Pancreas (tissue), 10 donors: ENCODE measurements at regions of chrX and their contacts with region 1.

Region 1: GRCh38 chrX:103464774-103465117 is 54.5 kb downstream of the RAB40A start:
- DNase-seq: peak in 5 of 6 donors; percentile 35 to 77 (median 58)
- ATAC-seq: peak; percentile 91 to 99 (median 98)
- H3K4me3 ChIP-seq: peak overlapping the region in 1 of 4 donors; percentile 25
- H3K27ac ChIP-seq: no peak overlapping the region
- H3K4me1 ChIP-seq: no peaks in the 10 kb centered on the region
- H3K27me3 ChIP-seq: peaks cover 0 to 6% (median 2%) of the 10 kb centered on the region in 4 donors
- CTCF ChIP-seq: peak; percentile 44 to 68 (median 56)

Region 2: GRCh38 chrX:103248553-103248952 is 216.2 kb before region 1 on chrX:
- intact Hi-C with region 1: no loop called
- DNase-seq: no peak
- ATAC-seq: peak in 2 of 4 donors; percentile 57
- H3K4me3 ChIP-seq: no peak overlapping the region
- H3K27ac ChIP-seq: no peak overlapping the region
- H3K4me1 ChIP-seq: peaks cover 0 to 5% (median 3%) of the 10 kb centered on the region in 3 donors
- H3K27me3 ChIP-seq: no peaks in the 10 kb centered on the region
- CTCF ChIP-seq: peak in 2 of 4 donors; percentile 8 to 28

Region 3: GRCh38 chrX:103329991-103330390 is 134.8 kb before region 1 on chrX and contains the start of gene TCEAL7:
- intact Hi-C with region 1: loop called in 1 of 3 experiments (anchors 10 kb)
- DNase-seq: no peak
- ATAC-seq: no peak
- H3K4me3 ChIP-seq: no peak within 1 kb of the TSS
- H3K27ac ChIP-seq: no peak within 1 kb of the TSS
- H3K4me1 ChIP-seq: no peaks in the 10 kb centered on the region
- H3K27me3 ChIP-seq: peaks cover 0 to 23% (median 8%) of the 10 kb centered on the region in 4 donors
- CTCF ChIP-seq: no peak
- total RNA-seq, gene TCEAL7: 0.12 to 1.3 (median 0.34) TPM

Region 4: GRCh38 chrX:103343105-103343504 is 121.6 kb before region 1 on chrX:
- intact Hi-C with region 1: loop called in 2 of 3 experiments (anchors 10 kb)
- DNase-seq: peak in 1 of 6 donors; percentile 50
- ATAC-seq: peak in 3 of 4 donors; percentile 71 to 77 (median 76)
- H3K4me3 ChIP-seq: no peak overlapping the region
- H3K27ac ChIP-seq: no peak overlapping the region
- H3K4me1 ChIP-seq: no peaks in the 10 kb centered on the region
- H3K27me3 ChIP-seq: peaks cover 0 to 16% (median 0%) of the 10 kb centered on the region in 4 donors
- CTCF ChIP-seq: peak; percentile 41 to 68 (median 54)

Region 5: GRCh38 chrX:103533511-103534216 is 68.9 kb after region 1 on chrX:
- intact Hi-C with region 1: no loop called
- DNase-seq: peak; percentile 36 to 89 (median 76)
- ATAC-seq: peak; percentile 71 to 96 (median 90)
- H3K4me3 ChIP-seq: peak overlapping the region in 2 of 4 donors; percentile 8 to 37
- H3K27ac ChIP-seq: no peak overlapping the region
- H3K4me1 ChIP-seq: no peaks in the 10 kb centered on the region
- H3K27me3 ChIP-seq: peaks cover 0 to 20% (median 2%) of the 10 kb centered on the region in 4 donors
- CTCF ChIP-seq: peak; percentile 62 to 80 (median 74)